ENCODE measurements at regions of chrX and their contacts with region 1.

Region 1: GRCh38 chrX:135484641-135485289 is 35.7 kb upstream of the INTS6L start:
- DNase-seq: no peak
- ATAC-seq: peak; percentile 25
- H3K4me3 Mint-ChIP-seq: no peak overlapping the region
- H3K27ac Mint-ChIP-seq: no peak overlapping the region
- H3K4me1 Mint-ChIP-seq: peaks cover 13% of the 10 kb centered on the region
- H3K27me3 Mint-ChIP-seq: no peaks in the 10 kb centered on the region
- CTCF ChIP-seq: no peak

Region 2: DNA sequence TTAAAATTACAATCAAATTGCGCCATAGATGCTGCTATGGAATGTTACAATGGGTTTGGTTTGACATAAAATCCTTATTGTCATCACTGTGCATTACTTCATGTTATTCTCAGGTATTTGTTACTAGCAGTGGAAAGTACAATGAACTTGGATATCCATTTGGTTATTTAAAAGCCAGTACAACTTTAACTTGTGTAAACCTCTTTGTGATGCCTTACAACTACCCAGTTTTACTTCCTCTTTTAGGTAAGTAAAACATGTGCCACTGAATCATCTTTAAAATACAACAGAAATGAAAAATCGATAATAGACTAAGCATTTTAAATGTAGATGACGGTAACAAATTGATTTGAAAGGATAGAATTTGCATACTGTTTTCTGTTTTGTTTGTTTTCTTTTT is 71.3 kb after region 1 on chrX:
- CTCF ChIA-PET with region 1: no interaction called
- POLR2A ChIA-PET with region 1: no interaction called
- intact Hi-C with region 1: loop called (anchors 5 kb)
- DNase-seq: no peak
- ATAC-seq: peak; percentile 56
- H3K4me3 Mint-ChIP-seq: no peak overlapping the region
- H3K27ac Mint-ChIP-seq: no peak overlapping the region
- H3K4me1 Mint-ChIP-seq: peaks cover 11% of the 10 kb centered on the region
- H3K27me3 Mint-ChIP-seq: no peaks in the 10 kb centered on the region
- CTCF ChIP-seq: no peak

Region 3: DNA sequence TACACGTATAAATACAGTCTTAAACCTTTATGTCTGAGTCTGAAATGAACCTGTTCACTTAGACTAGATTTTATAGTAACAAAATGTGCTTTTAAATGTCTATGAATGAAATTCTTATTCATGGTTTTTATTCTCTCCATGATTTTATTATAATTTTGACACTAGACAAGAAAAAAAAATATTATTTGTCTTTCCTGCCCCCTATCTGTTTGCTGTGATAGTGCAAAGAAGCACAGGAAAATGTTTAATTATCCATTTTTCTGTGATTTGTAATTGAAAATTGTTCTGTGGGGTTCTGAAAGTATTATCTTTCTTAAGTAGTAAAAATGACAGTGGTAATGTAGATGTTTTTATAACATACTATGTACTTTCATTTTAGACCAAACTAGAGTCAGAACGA is 87.7 kb after region 1 on chrX:
- CTCF ChIA-PET with region 1: interaction called, 5 read pairs
- POLR2A ChIA-PET with region 1: no interaction called
- intact Hi-C with region 1: loop called (anchors 1 kb)
- DNase-seq: no peak
- ATAC-seq: no peak
- H3K4me3 Mint-ChIP-seq: no peak overlapping the region
- H3K27ac Mint-ChIP-seq: no peak overlapping the region
- H3K4me1 Mint-ChIP-seq: no peaks in the 10 kb centered on the region
- H3K27me3 Mint-ChIP-seq: no peaks in the 10 kb centered on the region
- CTCF ChIP-seq: no peak

Region 4: GRCh38 chrX:135596495-135596894 is 111.7 kb after region 1 on chrX:
- CTCF ChIA-PET with region 1: no interaction called
- POLR2A ChIA-PET with region 1: no interaction called
- intact Hi-C with region 1: loop called (anchors 1 kb)
- DNase-seq: no peak
- ATAC-seq: peak; percentile 42
- H3K4me3 Mint-ChIP-seq: no peak overlapping the region
- H3K27ac Mint-ChIP-seq: no peak overlapping the region
- H3K4me1 Mint-ChIP-seq: no peaks in the 10 kb centered on the region
- H3K27me3 Mint-ChIP-seq: peaks cover 5% of the 10 kb centered on the region
- CTCF ChIP-seq: no peak

Region 5: DNA sequence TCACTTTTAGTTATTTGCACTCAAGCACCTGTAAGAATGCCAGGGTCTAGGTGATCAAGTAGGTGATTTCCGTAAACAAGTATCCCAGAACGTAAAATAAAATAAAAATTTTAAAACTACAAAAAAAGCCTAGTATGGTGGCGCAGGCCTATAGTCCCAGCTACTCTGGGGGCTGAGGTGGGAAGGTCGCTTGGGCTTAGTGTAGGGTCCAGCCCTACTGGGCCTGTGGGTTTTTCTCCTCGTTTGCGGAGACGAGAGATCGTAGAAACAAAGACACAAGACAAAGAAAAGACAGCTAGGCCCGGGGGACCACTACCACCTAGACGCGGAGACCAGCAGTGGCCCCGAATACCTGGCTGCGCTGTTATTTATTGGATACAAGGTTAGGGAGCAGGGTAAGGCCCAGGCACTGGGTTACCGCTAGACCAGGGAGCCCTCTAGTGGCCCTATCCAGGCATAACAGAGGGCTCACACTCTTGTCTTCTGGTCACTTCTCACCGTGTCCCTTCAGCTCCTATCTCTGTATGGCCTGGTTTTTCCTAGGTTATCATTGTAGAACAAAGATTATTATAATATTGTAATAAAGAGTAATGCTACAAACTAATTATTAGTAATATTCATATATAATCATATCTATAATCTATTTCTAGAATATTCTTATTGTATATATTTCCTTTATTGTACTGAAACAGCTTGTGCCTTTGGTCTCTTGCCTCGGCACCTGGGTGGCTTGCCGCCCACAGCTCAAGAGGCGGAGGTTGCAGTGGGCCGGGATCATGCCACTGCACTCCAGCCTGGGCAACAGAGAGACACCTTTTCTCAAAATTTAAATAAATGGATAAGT is 447.1 kb after region 1 on chrX:
- CTCF ChIA-PET with region 1: interaction called, 3 read pairs
- POLR2A ChIA-PET with region 1: no interaction called
- intact Hi-C with region 1: loop called (anchors 1 kb)
- DNase-seq: peak; percentile 15
- ATAC-seq: no peak
- H3K4me3 Mint-ChIP-seq: no peak overlapping the region
- H3K27ac Mint-ChIP-seq: no peak overlapping the region
- H3K4me1 Mint-ChIP-seq: no peaks in the 10 kb centered on the region
- H3K27me3 Mint-ChIP-seq: no peaks in the 10 kb centered on the region
- CTCF ChIP-seq: no peak